H1 (cell line): ENCODE measurements at regions of chr5 and their contacts with region 1.

Region 1: GRCh38 chr5:181223058-181223728 is at the start of gene TRIM41:
- DNase-seq: peak; percentile 97
- H3K4me3 ChIP-seq: peak within 1 kb of the TSS; percentile 83 to 98 (median 95)
- H3K27ac ChIP-seq: peak within 1 kb of the TSS; percentile 78
- H3K4me1 ChIP-seq: peaks cover 0 to 8% (median 4%) of the 10 kb centered on the region in 4 experiments; a peak in 4 of 7 replicates
- H3K27me3 ChIP-seq: no peaks in the 10 kb centered on the region
- CTCF ChIP-seq: peak in 1 of 3 experiments; percentile 5; a peak in 1 of 4 replicates
- EP300 ChIP-seq: no peak
- POLR2A ChIP-seq: peak in 1 of 2 experiments; percentile 88; a peak in 2 of 3 replicates
- RAD21 ChIP-seq: 0 out of 4 replicates have a peak, but pooled peaks of 1 of the 2 experiments have one; percentile 14
- total RNA-seq, gene TRIM41: 21.2 and 21.6 TPM in 2 replicates

Region 2: DNA sequence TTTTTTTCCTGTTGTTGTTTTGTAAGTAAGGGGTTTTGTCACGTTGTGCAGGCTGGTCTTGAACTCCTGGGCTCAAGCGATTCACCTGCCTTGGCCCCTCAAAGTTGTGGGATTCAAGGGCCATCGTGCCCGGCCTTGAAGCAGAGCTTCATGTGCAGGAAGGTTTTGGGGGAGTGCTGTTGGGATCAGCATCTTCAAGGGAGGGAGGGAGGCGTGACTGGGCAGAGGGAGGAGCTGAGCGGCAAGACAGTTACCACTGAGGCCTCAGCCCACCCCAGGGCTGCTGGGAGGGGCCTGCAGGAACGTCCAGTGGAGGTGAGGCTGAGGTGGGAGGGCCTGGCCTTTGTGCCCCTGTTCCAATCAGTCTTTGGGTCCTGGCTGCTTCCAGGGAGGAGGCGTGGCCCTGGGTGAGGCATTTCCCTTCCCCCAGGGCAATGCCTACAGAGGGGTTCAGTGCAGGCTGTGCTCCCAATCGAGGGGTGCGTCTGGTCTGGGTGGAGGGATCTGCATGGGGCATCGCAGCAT is 113.6 kb before region 1 on chr5:
- CTCF ChIA-PET with region 1: no interaction called
- POLR2A ChIA-PET with region 1: no interaction called
- DNase-seq: peak in 1 of 2 experiments; percentile 67
- H3K4me3 ChIP-seq: no peak overlapping the region
- H3K27ac ChIP-seq: no peak overlapping the region
- H3K4me1 ChIP-seq: peaks cover 0 to 12% (median 6%) of the 10 kb centered on the region in 4 experiments; a peak in 6 of 7 replicates
- H3K27me3 ChIP-seq: peaks cover 10 to 22% (median 14%) of the 10 kb centered on the region in 4 experiments
- CTCF ChIP-seq: no peak
- EP300 ChIP-seq: no peak
- POLR2A ChIP-seq: no peak
- RAD21 ChIP-seq: no peak

Region 3: DNA sequence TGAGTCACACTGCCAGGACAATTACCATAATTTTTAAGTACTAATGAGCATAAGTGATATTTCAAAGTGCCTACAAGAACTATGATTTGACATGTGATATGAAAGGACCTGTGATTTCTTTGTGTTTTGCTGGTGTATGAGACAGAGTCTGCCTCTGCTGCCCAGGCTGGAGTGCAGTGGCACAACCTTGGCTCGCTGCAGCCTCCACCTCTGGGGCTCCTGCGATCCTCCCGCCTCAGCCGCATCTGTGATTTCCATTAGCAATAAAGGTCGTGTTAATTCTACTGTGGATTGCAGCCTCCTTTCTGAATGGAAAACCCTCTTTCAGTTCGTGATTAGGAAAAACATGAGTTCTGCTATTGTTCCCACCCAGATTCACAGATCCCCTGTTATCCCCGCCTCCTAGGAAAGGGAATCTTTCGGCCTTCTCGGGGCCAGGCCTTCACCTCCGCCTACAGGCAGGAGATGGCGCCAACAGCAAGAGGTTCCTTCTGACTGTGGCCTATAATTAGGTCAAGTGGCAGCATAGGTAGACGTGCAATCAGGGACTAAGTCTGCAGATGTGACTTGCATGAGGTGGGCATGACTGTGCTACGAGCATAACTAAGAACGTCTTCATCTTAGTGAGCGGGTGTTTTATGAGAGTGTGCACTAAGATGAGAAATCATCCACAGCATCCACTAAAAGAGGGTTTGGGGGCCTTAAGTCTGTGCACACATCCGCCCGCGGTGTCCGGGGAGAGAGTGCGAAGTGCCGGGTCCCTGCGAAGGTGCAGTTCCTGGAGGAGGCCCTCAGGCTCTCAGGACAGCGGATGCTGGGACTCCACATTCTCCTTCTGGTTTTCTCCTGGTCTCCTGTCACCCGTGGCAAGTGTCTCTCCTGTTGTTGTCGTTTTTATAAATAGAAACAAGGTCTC is 41.3 kb before region 1 on chr5:
- CTCF ChIA-PET with region 1: interaction called, 4 read pairs
- POLR2A ChIA-PET with region 1: interaction called, 11 read pairs
- DNase-seq: peak in 1 of 2 experiments; percentile 76
- H3K4me3 ChIP-seq: no peak overlapping the region
- H3K27ac ChIP-seq: no peak overlapping the region
- H3K4me1 ChIP-seq: no peaks in the 10 kb centered on the region
- H3K27me3 ChIP-seq: no peaks in the 10 kb centered on the region
- CTCF ChIP-seq: peak in 2 of 3 experiments; percentile 80 to 90; a peak in 3 of 4 replicates
- EP300 ChIP-seq: no peak
- POLR2A ChIP-seq: no peak
- RAD21 ChIP-seq: peak; percentile 85

Region 4: DNA sequence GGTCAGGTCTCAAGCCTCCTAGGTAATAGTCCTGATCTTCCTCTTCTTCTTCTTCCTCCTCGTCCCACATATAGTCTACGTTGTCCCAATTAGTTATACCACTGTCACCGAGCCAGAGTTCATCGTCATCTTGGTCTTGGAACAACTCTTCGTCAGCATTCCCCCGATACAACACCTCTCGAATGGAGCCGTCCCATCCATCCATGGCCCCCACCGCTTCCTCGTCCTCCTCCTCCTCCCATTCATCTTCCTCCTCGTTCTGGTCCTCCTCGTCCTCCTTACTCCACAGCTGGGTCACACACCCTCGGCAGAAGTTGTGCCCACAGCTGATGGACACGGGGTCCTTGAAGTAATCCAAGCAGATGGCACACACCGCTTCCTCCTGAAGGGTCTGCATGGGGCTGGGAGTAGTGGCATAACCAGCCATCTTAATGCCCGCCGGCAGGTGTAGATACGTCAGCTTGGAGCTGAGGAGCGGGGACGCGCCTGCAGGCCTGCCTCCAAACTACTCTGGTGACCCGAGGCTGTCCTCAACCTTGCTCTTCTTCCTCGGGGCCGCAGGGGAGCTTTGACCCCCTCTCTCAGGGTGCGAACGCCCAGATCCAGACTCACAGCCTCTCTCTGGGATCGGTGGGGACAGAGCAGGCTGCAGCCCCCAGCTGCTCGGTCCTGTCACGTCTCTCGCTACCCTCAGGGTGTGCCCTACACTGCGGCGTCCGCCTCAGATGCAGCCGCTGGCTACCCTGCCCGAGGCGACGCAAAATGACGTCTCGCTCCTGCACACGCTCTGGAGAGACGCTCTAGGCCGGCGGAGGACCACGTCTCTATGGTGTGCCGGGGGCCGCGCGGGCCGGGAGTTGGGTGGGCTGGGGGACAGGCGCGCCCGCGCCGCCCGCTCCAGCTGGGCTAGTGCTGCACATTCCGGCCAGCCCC is 37.5 kb after region 1 on chr5 and contains the start of gene TRIM52:
- CTCF ChIA-PET with region 1: interaction called, 3 read pairs
- POLR2A ChIA-PET with region 1: interaction called, 1,334 read pairs
- DNase-seq: peak; percentile 83 to 94
- H3K4me3 ChIP-seq: peak within 1 kb of the TSS; percentile 76 to 92 (median 86)
- H3K27ac ChIP-seq: peak within 1 kb of the TSS; percentile 44; the same call in 1 of the 2 replicates
- H3K4me1 ChIP-seq: peaks cover 4 to 10% (median 6%) of the 10 kb centered on the region in 4 experiments; a peak in 6 of 7 replicates
- H3K27me3 ChIP-seq: peaks cover 0 to 1% (median 0%) of the 10 kb centered on the region in 4 experiments; a peak in 1 of 7 replicates
- CTCF ChIP-seq: peak in 1 of 3 experiments; percentile 15; a peak in 1 of 4 replicates
- EP300 ChIP-seq: peak in 1 of 2 experiments; percentile 23; a peak in 1 of 3 replicates
- POLR2A ChIP-seq: peak in 1 of 2 experiments; percentile 81; a peak in 2 of 3 replicates
- RAD21 ChIP-seq: no peak; a peak in 1 of 4 replicates
- total RNA-seq, gene TRIM52: 5.7 and 6.2 TPM in 2 replicates